Activated CD4-positive, alpha-beta T cell treated with anti-CD3 and anti-CD28 coated beads for 36 hours (primary cell): ENCODE measurements at regions of chr1 and their contacts with region 1.

Region 1: GRCh38 chr1:219324629-219325367 is 151.1 kb downstream of the LYPLAL1 start:
- DNase-seq: peak; percentile 20
- ATAC-seq: peak; percentile 94
- H3K4me3 Mint-ChIP-seq: no peak overlapping the region
- H3K27ac Mint-ChIP-seq: no peak overlapping the region
- H3K4me1 Mint-ChIP-seq: peaks cover 11% of the 10 kb centered on the region
- H3K27me3 Mint-ChIP-seq: peaks cover 17% of the 10 kb centered on the region

Region 2: GRCh38 chr1:218351391-218352074 is 973.3 kb before region 1 on chr1:
- CTCF ChIA-PET with region 1: no interaction called
- POLR2A ChIA-PET with region 1: no interaction called
- intact Hi-C with region 1: loop called in 1 of 2 experiments (anchors 2 kb)
- DNase-seq: peak; percentile 51
- ATAC-seq: peak; percentile 92
- H3K4me3 Mint-ChIP-seq: peak overlapping the region; percentile 43
- H3K27ac Mint-ChIP-seq: no peak overlapping the region
- H3K4me1 Mint-ChIP-seq: peaks cover 27% of the 10 kb centered on the region
- H3K27me3 Mint-ChIP-seq: peaks cover 53% of the 10 kb centered on the region

Region 3: GRCh38 chr1:218377143-218377660 is 947.6 kb before region 1 on chr1:
- CTCF ChIA-PET with region 1: no interaction called
- POLR2A ChIA-PET with region 1: no interaction called
- intact Hi-C with region 1: loop called in 1 of 2 experiments (anchors 10 kb)
- DNase-seq: peak; percentile 77
- ATAC-seq: peak; percentile 94
- H3K4me3 Mint-ChIP-seq: no peak overlapping the region
- H3K27ac Mint-ChIP-seq: peak overlapping the region; percentile 31
- H3K4me1 Mint-ChIP-seq: peaks cover 8% of the 10 kb centered on the region
- H3K27me3 Mint-ChIP-seq: peaks cover 54% of the 10 kb centered on the region

Region 4: GRCh38 chr1:219066631-219067349 is 258.0 kb before region 1 on chr1:
- CTCF ChIA-PET with region 1: no interaction called
- POLR2A ChIA-PET with region 1: no interaction called
- intact Hi-C with region 1: loop called in 1 of 2 experiments (anchors 5 kb)
- DNase-seq: no peak
- ATAC-seq: peak; percentile 49
- H3K4me3 Mint-ChIP-seq: no peak overlapping the region
- H3K27ac Mint-ChIP-seq: no peak overlapping the region
- H3K4me1 Mint-ChIP-seq: peaks cover 3% of the 10 kb centered on the region
- H3K27me3 Mint-ChIP-seq: peaks cover 2% of the 10 kb centered on the region

Region 5: GRCh38 chr1:219189021-219189824 is 135.6 kb before region 1 on chr1:
- CTCF ChIA-PET with region 1: no interaction called
- POLR2A ChIA-PET with region 1: no interaction called
- intact Hi-C with region 1: loop called in 1 of 2 experiments (anchors 1 kb)
- DNase-seq: no peak
- ATAC-seq: peak; percentile 92
- H3K4me3 Mint-ChIP-seq: no peak overlapping the region
- H3K27ac Mint-ChIP-seq: no peak overlapping the region
- H3K4me1 Mint-ChIP-seq: peaks cover 34% of the 10 kb centered on the region
- H3K27me3 Mint-ChIP-seq: no peaks in the 10 kb centered on the region